ENCODE measurements at regions of chr19 and their contacts with region 1.

Region 1: GRCh38 chr19:37077934-37078725 is at the start of gene ZNF420:
- DNase-seq: peak; percentile 96
- ATAC-seq: peak; percentile 95
- H3K4me3 ChIP-seq: peak within 1 kb of the TSS; percentile 76 to 93 (median 85)
- H3K4me3 Mint-ChIP-seq: peak within 1 kb of the TSS; percentile 93
- H3K27ac ChIP-seq: peak within 1 kb of the TSS; percentile 71 to 89
- H3K27ac Mint-ChIP-seq: peak within 1 kb of the TSS; percentile 96
- H3K4me1 ChIP-seq: peaks cover 14 to 20% of the 10 kb centered on the region in 2 donors
- H3K4me1 Mint-ChIP-seq: peaks cover 29% of the 10 kb centered on the region
- H3K27me3 ChIP-seq: no peaks in the 10 kb centered on the region
- H3K27me3 Mint-ChIP-seq: no peaks in the 10 kb centered on the region
- CTCF ChIP-seq: no peak
- total RNA-seq, gene ZNF420: 17.4 and 24.9 TPM in 2 replicates

Region 2: DNA sequence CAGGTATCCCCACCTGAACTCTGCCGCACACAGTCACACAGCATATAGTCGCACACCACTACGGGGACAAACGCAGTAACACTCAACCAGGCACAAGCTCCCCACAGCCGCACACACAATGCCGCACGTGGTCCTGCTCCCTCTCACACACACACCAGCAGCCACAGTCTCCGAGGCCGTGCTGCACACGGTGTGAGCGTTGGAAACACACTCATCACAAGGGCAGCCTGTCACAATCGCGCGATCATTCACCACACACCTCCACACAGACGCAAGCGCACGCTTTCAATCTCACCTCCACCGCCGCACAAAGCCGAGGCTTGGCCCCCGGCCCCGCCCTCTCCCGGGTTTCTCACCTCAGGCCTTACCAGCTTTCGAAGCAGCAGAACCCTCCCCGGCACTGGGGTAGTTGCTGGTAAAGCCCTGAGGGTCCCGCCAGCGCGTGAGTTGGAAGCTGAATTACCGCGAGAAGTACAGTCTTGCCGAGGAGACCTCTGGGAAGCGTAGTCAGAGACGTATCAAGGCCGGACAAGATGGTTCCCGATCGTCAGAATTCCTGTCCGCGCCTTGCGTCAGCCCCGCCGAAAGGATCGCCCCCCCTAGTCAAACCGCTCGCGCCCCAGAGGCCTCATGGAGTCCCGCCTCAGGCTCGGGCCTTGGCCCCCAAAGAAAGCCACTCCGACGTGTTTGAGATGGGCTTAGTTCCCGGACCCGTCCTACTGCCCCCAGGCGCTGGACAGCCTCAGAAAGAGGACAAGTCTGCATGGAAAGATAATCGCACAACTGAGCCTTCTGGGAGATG is 588.8 kb before region 1 on chr19 and contains the start of gene ZNF566:
- CTCF ChIA-PET with region 1: no interaction called
- POLR2A ChIA-PET with region 1: no interaction called
- intact Hi-C with region 1: loop called (anchors 1 kb)
- DNase-seq: peak; percentile 96
- ATAC-seq: peak; percentile 90
- H3K4me3 ChIP-seq: peak within 1 kb of the TSS; percentile 79 to 98 (median 90)
- H3K4me3 Mint-ChIP-seq: peak within 1 kb of the TSS; percentile 99
- H3K27ac ChIP-seq: peak within 1 kb of the TSS; percentile 85 to 86
- H3K27ac Mint-ChIP-seq: peak within 1 kb of the TSS; percentile 99
- H3K4me1 ChIP-seq: peaks cover 16 to 30% of the 10 kb centered on the region in 2 donors
- H3K4me1 Mint-ChIP-seq: peaks cover 41% of the 10 kb centered on the region
- H3K27me3 ChIP-seq: no peaks in the 10 kb centered on the region
- H3K27me3 Mint-ChIP-seq: no peaks in the 10 kb centered on the region
- CTCF ChIP-seq: no peak
- total RNA-seq, gene ZNF566: 26.0 and 26.6 TPM in 2 replicates

Region 3: DNA sequence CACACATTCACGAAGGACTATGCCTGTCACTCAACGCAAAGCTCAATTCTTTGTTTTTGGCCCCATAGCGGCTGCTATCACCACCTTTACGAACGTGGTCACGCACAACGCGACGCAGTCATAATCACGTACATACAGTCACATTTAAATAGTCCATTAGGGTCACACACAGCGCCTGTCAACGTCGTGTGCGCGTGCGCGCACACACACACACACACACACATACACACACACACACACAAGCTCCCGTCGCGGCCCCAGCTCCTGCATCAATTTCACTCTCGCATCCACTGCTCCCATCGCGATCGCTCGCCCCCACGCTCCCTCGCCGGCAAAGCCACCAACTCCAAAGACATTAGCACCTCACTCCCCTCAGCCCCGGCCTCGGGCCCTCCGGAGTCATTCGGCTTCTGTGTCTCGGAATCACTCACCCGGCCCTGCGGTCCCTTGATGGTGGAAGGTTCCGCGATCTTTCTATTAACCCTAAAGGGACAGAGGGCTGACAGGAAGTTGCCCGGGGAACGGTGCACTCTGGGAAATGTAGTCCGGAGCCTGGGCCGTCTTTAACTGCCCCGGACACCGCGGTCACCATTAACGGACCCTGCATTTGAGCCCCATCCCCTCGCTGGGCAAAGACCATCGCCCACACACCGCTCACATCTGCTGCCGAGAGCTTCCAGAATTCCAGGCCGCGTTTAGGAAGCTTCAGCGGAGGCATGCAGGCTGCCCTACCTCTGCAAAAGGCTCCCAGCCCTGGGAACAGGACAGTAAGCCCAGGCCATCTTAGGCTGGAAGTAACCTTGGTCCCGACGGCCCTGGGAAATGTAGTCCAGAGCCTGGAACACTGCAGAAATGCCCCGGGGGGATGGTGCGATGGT is 240.0 kb before region 1 on chr19 and contains the start of gene ZNF790:
- CTCF ChIA-PET with region 1: no interaction called
- POLR2A ChIA-PET with region 1: no interaction called
- intact Hi-C with region 1: loop called (anchors 5 kb)
- DNase-seq: peak; percentile 94
- ATAC-seq: peak; percentile 90
- H3K4me3 ChIP-seq: peak within 1 kb of the TSS; percentile 79 to 90 (median 83)
- H3K4me3 Mint-ChIP-seq: no peak within 1 kb of the TSS
- H3K27ac ChIP-seq: peak within 1 kb of the TSS; percentile 84 to 89
- H3K27ac Mint-ChIP-seq: no peak within 1 kb of the TSS
- H3K4me1 ChIP-seq: peaks cover 10 to 18% of the 10 kb centered on the region in 2 donors
- H3K4me1 Mint-ChIP-seq: no peaks in the 10 kb centered on the region
- H3K27me3 ChIP-seq: no peaks in the 10 kb centered on the region
- H3K27me3 Mint-ChIP-seq: no peaks in the 10 kb centered on the region
- CTCF ChIP-seq: no peak
- total RNA-seq, gene ZNF790: 14.8 and 15.1 TPM in 2 replicates

Region 4: DNA sequence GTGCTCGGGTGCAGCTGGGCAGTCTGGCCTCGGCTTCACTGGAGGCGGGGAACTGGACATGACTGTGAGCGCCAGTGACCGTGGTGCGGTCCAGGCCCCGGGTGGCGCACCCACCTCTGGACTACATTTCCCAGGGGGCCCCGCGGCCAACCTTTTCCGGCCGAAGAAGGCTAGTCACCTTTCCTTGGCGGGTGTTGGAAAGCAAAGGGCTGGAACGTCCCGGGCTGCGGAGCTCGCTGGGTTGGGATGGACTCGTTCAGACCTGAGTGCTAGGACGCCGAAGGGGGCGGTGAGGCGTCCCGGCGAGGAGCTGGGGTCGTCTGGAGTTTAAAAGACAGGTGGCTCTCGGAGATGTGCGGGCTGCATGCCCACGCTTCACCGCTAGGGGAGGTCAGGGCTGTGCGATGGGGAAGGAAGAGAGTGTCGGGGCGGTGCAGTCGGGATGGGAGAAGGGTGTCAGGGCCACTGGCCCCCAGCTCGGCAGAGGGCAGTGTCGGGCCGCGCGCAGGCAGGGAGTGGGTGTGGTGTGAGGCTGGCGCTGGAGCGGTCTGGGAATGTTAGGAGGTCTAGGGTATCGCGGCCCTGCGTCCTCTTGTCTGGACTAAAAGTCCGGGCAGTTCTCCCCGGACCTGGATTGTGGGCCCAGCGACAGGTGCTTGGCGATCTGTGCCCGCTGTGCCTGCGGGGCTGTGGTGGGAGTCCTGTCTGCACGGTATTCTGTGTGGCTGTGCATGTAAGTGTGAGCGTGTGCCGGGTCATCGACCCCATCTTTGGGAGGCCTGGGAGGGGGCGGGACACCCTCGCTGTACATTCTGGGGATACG is 104.9 kb before region 1 on chr19:
- CTCF ChIA-PET with region 1: interaction called, 6 read pairs
- POLR2A ChIA-PET with region 1: no interaction called
- intact Hi-C with region 1: loop called (anchors 1 kb)
- DNase-seq: peak; percentile 92
- ATAC-seq: peak; percentile 97
- H3K4me3 ChIP-seq: peak overlapping the region; percentile 52 to 92 (median 79)
- H3K4me3 Mint-ChIP-seq: peak overlapping the region; percentile 97
- H3K27ac ChIP-seq: peak overlapping the region; percentile 49 to 71
- H3K27ac Mint-ChIP-seq: peak overlapping the region; percentile 91
- H3K4me1 ChIP-seq: peaks cover 11 to 16% of the 10 kb centered on the region in 2 donors
- H3K4me1 Mint-ChIP-seq: peaks cover 13% of the 10 kb centered on the region
- H3K27me3 ChIP-seq: no peaks in the 10 kb centered on the region
- H3K27me3 Mint-ChIP-seq: no peaks in the 10 kb centered on the region
- CTCF ChIP-seq: peak; percentile 78

Region 5: GRCh38 chr19:37114020-37114419 is 35.9 kb after region 1 on chr19:
- CTCF ChIA-PET with region 1: no interaction called
- POLR2A ChIA-PET with region 1: no interaction called
- intact Hi-C with region 1: no loop called
- DNase-seq: no peak
- ATAC-seq: no peak
- H3K4me3 ChIP-seq: peak overlapping the region in 1 of 5 experiments; percentile 10
- H3K4me3 Mint-ChIP-seq: no peak overlapping the region
- H3K27ac ChIP-seq: no peak overlapping the region
- H3K27ac Mint-ChIP-seq: no peak overlapping the region
- H3K4me1 ChIP-seq: no peaks in the 10 kb centered on the region
- H3K4me1 Mint-ChIP-seq: no peaks in the 10 kb centered on the region
- H3K27me3 ChIP-seq: no peaks in the 10 kb centered on the region
- H3K27me3 Mint-ChIP-seq: no peaks in the 10 kb centered on the region
- CTCF ChIP-seq: peak; percentile 32

Region 6: DNA sequence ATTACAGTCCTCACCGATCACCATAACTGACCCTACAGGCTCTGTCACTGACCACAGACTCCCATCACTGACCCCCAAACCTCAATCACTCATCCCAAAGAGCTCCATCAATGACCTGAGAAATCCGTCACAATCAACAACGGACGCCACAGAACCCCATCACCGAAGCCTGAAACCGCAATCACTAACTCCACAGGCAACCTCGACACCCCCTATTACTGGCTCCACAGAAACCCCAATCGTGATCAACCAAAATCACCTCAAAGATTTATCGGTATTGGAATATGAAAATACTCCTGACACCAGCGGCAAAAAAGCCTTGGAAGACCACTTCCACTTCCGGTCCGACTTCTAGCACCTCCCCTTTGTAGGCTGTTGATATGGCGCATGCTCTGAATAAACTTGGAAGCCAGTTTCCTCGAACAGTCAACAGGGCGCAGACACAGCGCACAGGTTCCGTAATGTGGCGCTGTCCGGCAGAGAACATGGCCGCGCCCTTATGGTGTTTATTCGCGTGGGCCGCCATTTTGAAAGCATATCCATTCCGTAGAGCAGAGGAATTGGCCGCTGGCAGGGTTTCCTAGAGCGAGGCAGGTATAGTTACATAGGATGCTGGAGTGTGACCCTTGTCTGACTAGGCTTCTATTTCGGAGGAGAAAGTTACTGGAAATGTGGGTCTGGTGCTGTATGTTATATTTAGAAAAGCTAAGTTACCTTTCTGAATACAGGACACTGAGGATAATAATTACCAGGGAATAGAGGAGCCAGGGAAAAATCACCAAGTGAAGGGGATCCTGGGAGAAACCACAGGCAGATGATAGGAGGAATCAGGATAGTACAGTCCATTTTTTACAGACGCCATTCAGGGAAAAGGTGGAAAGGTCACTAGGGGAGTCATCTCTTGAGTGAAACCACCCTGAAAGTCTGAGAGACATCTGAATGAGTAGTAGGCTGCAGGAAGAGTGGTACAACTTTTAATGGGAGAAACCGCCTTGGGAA is 94.5 kb after region 1 on chr19 and contains the start of gene ZNF585A:
- CTCF ChIA-PET with region 1: interaction called, 9 read pairs
- POLR2A ChIA-PET with region 1: interaction called, 3 read pairs
- intact Hi-C with region 1: loop called (anchors 1 kb)
- DNase-seq: peak; percentile 96
- ATAC-seq: peak; percentile 100
- H3K4me3 ChIP-seq: peak within 1 kb of the TSS; percentile 72 to 96 (median 82)
- H3K4me3 Mint-ChIP-seq: no peak within 1 kb of the TSS
- H3K27ac ChIP-seq: peak within 1 kb of the TSS; percentile 70 to 89
- H3K27ac Mint-ChIP-seq: no peak within 1 kb of the TSS
- H3K4me1 ChIP-seq: peaks cover 5 to 7% of the 10 kb centered on the region in 2 donors
- H3K4me1 Mint-ChIP-seq: peaks cover 3% of the 10 kb centered on the region
- H3K27me3 ChIP-seq: no peaks in the 10 kb centered on the region
- H3K27me3 Mint-ChIP-seq: no peaks in the 10 kb centered on the region
- CTCF ChIP-seq: peak; percentile 23
- total RNA-seq, gene ZNF585A: 20.0 and 22.0 TPM in 2 replicates

Region 7: GRCh38 chr19:37594304-37594981 is 516.3 kb after region 1 on chr19 and contains the starts of genes ZNF540 and ZNF571:
- CTCF ChIA-PET with region 1: no interaction called
- POLR2A ChIA-PET with region 1: no interaction called
- intact Hi-C with region 1: loop called (anchors 1 kb)
- DNase-seq: peak; percentile 95
- ATAC-seq: peak; percentile 96
- H3K4me3 ChIP-seq: peak within 1 kb of the TSS; percentile 67 to 88 (median 87)
- H3K4me3 Mint-ChIP-seq: peak within 1 kb of the TSS; percentile 99
- H3K27ac ChIP-seq: peak within 1 kb of the TSS; percentile 93 to 96
- H3K27ac Mint-ChIP-seq: peak within 1 kb of the TSS; percentile 99
- H3K4me1 ChIP-seq: peaks cover 11 to 14% of the 10 kb centered on the region in 2 donors
- H3K4me1 Mint-ChIP-seq: peaks cover 25% of the 10 kb centered on the region
- H3K27me3 ChIP-seq: no peaks in the 10 kb centered on the region
- H3K27me3 Mint-ChIP-seq: no peaks in the 10 kb centered on the region
- CTCF ChIP-seq: no peak
- total RNA-seq, gene ZNF540: 10.7 and 10.8 TPM in 2 replicates
- total RNA-seq, gene ZNF571: 10.0 and 13.1 TPM in 2 replicates

Region 8: DNA sequence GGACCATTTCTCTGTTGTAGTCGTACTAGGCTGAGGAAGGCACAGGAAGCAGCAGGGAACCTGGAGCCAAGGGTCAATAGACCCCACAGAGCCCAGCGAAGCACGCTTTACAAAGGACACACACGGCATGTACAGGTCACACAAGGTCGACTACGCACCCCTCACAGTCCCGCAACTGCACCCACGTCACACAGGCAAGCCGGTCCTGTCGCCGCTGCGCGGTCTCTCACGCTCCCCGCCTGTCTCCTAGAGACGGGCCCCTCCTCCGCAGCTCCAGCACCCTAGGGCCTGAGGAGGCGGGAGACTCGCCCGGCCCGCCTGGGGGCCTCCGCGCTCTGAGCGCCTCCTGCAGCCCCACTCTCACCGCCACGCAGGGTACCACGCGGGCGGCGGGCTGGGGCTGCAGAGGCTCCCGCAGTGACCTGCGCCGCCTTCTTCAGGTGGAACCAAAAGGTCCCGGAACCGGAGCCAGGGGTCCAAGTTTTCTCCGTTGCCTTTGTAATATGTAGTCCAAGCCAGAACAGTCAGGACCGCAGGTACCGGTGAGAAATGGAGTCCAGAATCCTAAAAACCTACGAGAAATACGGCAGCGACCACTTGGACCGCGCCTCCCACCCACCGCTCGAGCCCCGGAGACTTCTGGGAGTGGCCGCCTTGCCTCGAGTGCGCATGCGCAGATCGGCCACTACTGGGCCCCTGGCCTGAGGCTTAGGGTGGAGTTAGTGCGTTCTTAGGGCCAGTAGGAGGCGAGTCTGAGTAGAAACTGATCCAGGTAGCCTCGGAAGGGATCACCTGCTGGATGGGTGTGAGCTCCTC is 641.2 kb after region 1 on chr19 and contains the start of gene ZNF607:
- CTCF ChIA-PET with region 1: no interaction called
- POLR2A ChIA-PET with region 1: interaction called, 4 read pairs
- intact Hi-C with region 1: loop called (anchors 5 kb)
- DNase-seq: peak; percentile 94
- ATAC-seq: peak; percentile 95
- H3K4me3 ChIP-seq: peak within 1 kb of the TSS; percentile 51 to 86 (median 82)
- H3K4me3 Mint-ChIP-seq: peak within 1 kb of the TSS; percentile 90
- H3K27ac ChIP-seq: peak within 1 kb of the TSS; percentile 62 to 68
- H3K27ac Mint-ChIP-seq: peak within 1 kb of the TSS; percentile 89
- H3K4me1 ChIP-seq: peaks cover 7 to 12% of the 10 kb centered on the region in 2 donors
- H3K4me1 Mint-ChIP-seq: peaks cover 14% of the 10 kb centered on the region
- H3K27me3 ChIP-seq: no peaks in the 10 kb centered on the region
- H3K27me3 Mint-ChIP-seq: no peaks in the 10 kb centered on the region
- CTCF ChIP-seq: peak; percentile 52
- total RNA-seq, gene ZNF607: 19.4 and 21.5 TPM in 2 replicates